Posterior vena cava (tissue), 2 donors: ENCODE measurements at regions of chr9 and their contacts with region 1.

Region 1: DNA sequence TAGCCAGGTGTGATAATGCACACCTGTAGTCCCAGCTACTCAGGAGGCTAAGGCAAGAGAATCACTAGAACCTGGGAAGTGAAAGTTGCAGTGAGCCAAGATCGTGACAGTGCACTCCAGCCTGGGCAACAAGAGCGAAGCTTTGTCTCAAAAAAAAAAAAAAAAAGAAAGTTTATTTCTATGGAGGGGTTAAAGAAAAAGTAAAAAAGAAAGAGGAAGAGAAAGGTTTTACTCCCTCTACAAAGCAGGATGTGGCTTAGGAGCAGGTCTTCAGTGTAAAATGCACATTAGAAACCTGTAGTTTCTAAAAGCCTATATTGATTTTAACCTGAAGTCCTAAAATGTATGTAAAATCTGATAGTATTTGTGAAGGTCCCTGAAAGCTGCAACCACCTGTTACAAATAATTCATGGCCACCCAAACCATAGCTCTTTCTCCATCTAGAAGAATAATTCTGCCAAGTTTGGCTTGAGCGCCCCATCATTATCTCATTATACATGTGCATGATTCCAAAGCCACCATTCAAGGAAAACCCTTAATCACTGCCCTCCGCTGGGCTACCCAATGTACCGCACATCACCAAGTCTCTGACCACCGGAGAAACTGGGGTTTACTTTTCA is 3.4 kb downstream of the FNBP1 start:
- DNase-seq: no peak

Region 2: DNA sequence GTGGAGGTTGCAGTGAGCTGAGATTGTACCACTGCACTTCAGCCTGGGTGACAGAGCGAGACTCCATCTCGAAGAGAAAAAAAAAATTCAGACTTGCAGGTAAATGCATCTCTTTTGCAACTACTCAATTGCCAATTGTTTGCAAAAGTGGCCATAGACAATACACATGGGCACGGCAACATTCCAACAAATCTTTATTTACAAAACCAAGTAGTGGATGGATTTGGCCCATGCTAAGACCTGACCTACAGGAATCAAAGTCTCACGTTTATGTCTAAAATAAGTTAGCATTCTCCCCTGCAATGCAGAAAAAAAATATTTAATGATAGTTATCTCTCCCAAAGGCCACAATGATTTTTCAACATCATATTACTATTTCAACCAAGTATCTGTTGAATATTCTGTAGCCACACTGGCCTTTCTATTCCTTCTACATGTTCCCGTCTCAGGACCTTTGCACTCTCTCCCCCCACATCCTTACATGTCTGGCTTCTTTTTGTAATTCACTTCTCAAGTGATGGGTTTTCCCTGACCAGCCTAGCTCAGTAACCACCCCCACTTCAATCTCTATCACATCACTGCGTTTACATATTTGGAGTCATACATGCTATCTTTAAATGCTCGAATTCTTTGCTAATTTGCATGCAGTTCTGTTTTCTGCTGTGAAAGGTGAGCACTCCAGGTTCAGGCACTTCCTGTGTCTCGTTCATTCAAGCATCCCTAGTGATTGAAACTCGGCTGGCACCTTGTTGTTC is 50.9 kb before region 1 on chr9:
- intact Hi-C with region 1: loop called in 1 of 2 experiments (anchors 10 kb)
- DNase-seq: no peak